Activated CD4-positive, alpha-beta memory T cell treated with anti-CD3 and anti-CD28 coated beads for 36 hours (primary cell): ENCODE measurements at regions of chr3 and their contacts with region 1.

Region 1: DNA sequence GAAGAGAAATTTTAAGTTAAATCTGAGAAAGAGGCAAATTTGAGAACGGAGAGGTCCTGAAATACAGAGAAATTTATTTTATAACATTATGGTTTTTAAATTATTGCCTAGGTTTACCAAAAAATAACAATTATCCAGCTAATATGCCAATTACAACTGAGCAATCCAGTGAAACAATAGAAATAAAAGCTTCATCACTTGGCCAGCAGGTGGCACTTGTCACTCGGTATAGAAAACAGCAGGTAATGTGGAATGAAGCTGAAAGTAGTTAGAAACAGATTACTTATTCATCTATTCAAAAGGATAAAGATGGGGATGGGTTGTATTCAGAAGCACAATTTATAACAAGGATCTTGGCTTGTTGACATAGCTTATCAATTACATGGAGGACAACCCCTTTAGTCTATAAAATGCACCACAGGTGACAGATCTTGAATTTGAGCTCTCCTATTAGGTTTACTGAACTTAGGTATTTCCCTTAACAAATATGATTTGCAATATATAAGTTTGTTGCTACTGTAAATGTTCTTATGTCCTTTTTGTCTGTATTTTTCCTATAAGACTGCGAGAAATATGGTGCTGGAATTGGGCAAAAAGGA is 70.1 kb upstream of the GUCA1C start:
- DNase-seq: peak; percentile 44
- H3K4me3 Mint-ChIP-seq: no peak overlapping the region
- H3K27ac Mint-ChIP-seq: no peak overlapping the region
- H3K4me1 Mint-ChIP-seq: no peaks in the 10 kb centered on the region
- H3K27me3 Mint-ChIP-seq: peaks cover 7% of the 10 kb centered on the region

Region 2: GRCh38 chr3:108662130-108662738 is 361.5 kb before region 1 on chr3:
- CTCF ChIA-PET with region 1: interaction called, 4 read pairs
- POLR2A ChIA-PET with region 1: no interaction called
- intact Hi-C with region 1: loop called (anchors 2 kb)
- DNase-seq: peak; percentile 40
- H3K4me3 Mint-ChIP-seq: no peak overlapping the region
- H3K27ac Mint-ChIP-seq: no peak overlapping the region
- H3K4me1 Mint-ChIP-seq: peaks cover 11% of the 10 kb centered on the region
- H3K27me3 Mint-ChIP-seq: no peaks in the 10 kb centered on the region

Region 3: DNA sequence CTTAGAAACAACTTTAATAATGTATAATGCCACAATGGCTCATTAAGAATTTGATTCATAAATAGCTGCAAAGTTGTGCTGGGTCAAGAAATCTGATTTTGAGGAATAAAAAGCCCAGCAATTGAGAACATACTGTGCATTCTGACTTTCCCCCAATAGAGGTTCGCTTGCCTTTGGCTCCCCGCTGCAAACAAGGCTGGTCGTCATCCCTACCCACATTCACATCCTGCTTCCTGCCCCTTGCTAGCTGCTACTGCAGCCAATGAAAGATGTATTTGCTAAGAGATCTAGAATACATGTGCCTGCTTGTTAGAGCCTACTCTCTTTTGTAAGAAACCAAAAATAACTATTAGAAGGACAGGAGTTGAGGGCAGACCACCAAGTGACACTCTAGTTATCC is 18.3 kb before region 1 on chr3:
- CTCF ChIA-PET with region 1: interaction called, 15 read pairs
- POLR2A ChIA-PET with region 1: no interaction called
- intact Hi-C with region 1: no loop called
- DNase-seq: no peak
- H3K4me3 Mint-ChIP-seq: no peak overlapping the region
- H3K27ac Mint-ChIP-seq: no peak overlapping the region
- H3K4me1 Mint-ChIP-seq: no peaks in the 10 kb centered on the region
- H3K27me3 Mint-ChIP-seq: peaks cover 2% of the 10 kb centered on the region

Region 4: DNA sequence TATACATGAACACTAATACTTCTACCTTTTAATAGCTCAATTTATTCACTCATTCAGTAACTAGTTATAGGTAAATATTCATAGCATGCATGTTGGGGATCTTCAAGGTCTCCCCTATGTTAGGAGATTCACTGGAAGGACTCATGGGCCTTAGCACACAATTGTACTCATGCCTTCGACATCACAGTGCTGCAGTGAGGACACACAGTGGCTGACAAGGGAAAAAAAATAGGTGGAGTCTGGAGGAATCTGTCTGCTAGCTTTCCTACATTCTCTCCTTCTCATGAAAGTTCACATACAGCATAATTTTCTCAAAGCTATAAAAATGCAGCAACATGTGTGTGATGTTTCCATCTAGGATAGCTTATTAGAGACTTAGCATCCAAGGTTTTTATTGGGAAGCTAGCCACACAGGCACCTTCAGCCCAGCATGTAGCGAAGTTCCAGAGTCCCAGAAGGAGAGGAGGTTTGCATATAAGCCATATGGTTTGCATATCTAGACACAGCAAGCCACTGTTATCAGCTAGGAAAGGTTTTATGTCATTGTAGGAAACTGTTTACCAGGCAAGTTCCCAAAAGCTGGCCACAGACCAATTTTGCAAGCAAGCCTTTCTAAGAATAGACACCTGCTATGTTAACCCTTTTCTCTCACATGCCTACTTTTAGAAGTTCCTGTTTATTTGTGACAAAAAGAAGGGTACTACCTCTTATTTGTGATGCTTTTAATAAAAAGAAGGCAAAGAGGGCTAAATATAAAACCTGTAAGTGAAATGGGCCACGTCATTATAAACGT is 47.8 kb after region 1 on chr3:
- CTCF ChIA-PET with region 1: interaction called, 11 read pairs
- POLR2A ChIA-PET with region 1: no interaction called
- intact Hi-C with region 1: no loop called
- DNase-seq: no peak
- H3K4me3 Mint-ChIP-seq: no peak overlapping the region
- H3K27ac Mint-ChIP-seq: no peak overlapping the region
- H3K4me1 Mint-ChIP-seq: peaks cover 5% of the 10 kb centered on the region
- H3K27me3 Mint-ChIP-seq: peaks cover 27% of the 10 kb centered on the region

Region 5: GRCh38 chr3:109081746-109082510 is 58.2 kb after region 1 on chr3:
- CTCF ChIA-PET with region 1: interaction called, 51 read pairs
- POLR2A ChIA-PET with region 1: no interaction called
- intact Hi-C with region 1: loop called (anchors 1 kb)
- DNase-seq: peak; percentile 43
- H3K4me3 Mint-ChIP-seq: no peak overlapping the region
- H3K27ac Mint-ChIP-seq: no peak overlapping the region
- H3K4me1 Mint-ChIP-seq: peaks cover 5% of the 10 kb centered on the region
- H3K27me3 Mint-ChIP-seq: peaks cover 12% of the 10 kb centered on the region

Region 6: GRCh38 chr3:109224333-109224732 is 200.6 kb after region 1 on chr3:
- CTCF ChIA-PET with region 1: interaction called, 10 read pairs
- POLR2A ChIA-PET with region 1: no interaction called
- intact Hi-C with region 1: no loop called
- DNase-seq: peak; percentile 17
- H3K4me3 Mint-ChIP-seq: no peak overlapping the region
- H3K27ac Mint-ChIP-seq: no peak overlapping the region
- H3K4me1 Mint-ChIP-seq: no peaks in the 10 kb centered on the region
- H3K27me3 Mint-ChIP-seq: peaks cover 3% of the 10 kb centered on the region